Activated B cell treated with CpG ODN at 0.5 μM for 24 hours (primary cell): ENCODE measurements at regions of chrX and their contacts with region 1.

Region 1: DNA sequence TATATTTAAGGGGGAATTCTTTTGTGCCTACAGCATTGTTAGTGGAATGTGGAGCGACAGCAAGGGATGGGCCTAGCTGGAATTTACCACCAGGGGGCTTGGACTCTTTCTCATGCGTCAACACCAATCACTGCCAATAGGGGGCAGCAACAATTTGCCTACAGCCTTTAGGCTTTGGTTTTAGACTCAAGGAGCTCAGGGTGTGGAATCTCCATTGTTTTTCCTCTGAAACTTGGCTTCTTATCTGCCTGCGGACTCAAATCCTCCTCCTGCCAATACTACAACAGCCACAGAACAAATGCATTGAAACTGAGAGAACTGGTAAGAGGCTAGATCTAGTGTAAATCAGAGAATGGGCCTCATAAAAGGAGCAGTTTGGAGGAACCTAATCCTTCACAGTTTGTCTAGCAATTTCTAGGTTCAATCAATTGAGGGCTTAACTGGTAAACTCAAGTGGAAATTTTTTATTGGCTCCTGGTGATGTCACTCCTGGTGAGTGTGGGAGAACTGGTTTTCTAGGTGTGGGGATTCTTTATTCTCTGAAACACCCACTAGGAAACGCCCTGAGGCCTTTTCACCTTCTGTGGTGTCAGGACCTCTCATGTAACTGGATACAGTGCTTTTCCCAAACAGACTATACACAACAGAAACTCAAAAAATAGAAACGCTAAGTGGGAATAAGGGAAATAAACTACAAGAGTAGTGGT is 27.9 kb upstream of the TMSB4X start:
- DNase-seq: peak; percentile 47
- ATAC-seq: peak; percentile 19
- H3K4me3 Mint-ChIP-seq: peak overlapping the region; percentile 62
- H3K27ac Mint-ChIP-seq: peak overlapping the region; percentile 92
- H3K4me1 Mint-ChIP-seq: peaks cover 58% of the 10 kb centered on the region
- H3K27me3 Mint-ChIP-seq: no peaks in the 10 kb centered on the region
- CTCF ChIP-seq: no peak

Region 2: DNA sequence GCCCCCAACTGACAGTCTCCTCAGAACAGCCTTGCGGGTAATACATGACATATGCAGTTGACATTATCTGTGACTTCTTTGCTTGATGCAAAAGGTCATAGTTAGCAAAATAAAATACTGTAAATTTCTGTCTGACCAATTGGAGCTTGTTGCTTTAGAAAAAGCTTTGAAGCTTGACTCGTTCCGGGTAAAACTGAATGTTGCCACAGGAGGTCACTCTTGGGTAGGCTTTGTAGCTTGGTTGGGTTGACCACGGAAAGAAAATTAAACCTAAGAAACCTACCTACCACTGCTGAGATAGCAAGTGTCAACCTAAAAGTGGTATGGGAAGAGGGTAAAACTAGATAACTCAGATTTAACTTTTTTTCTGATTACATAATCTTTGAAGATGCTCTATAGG is 132.6 kb before region 1 on chrX:
- CTCF ChIA-PET with region 1: interaction called, 13 read pairs
- POLR2A ChIA-PET with region 1: interaction called, 3 read pairs
- intact Hi-C with region 1: no loop called
- DNase-seq: no peak
- ATAC-seq: peak; percentile 71
- H3K4me3 Mint-ChIP-seq: no peak overlapping the region
- H3K27ac Mint-ChIP-seq: no peak overlapping the region
- H3K4me1 Mint-ChIP-seq: no peaks in the 10 kb centered on the region
- H3K27me3 Mint-ChIP-seq: no peaks in the 10 kb centered on the region
- CTCF ChIP-seq: no peak

Region 3: GRCh38 chrX:12984629-12985319 is 37.8 kb after region 1 on chrX:
- CTCF ChIA-PET with region 1: interaction called, 13 read pairs
- POLR2A ChIA-PET with region 1: interaction called, 931 read pairs
- intact Hi-C with region 1: loop called (anchors 5 kb)
- DNase-seq: no peak
- ATAC-seq: peak; percentile 79
- H3K4me3 Mint-ChIP-seq: peak overlapping the region; percentile 53
- H3K27ac Mint-ChIP-seq: peak overlapping the region; percentile 91
- H3K4me1 Mint-ChIP-seq: peaks cover 62% of the 10 kb centered on the region
- H3K27me3 Mint-ChIP-seq: no peaks in the 10 kb centered on the region
- CTCF ChIP-seq: no peak

Region 4: DNA sequence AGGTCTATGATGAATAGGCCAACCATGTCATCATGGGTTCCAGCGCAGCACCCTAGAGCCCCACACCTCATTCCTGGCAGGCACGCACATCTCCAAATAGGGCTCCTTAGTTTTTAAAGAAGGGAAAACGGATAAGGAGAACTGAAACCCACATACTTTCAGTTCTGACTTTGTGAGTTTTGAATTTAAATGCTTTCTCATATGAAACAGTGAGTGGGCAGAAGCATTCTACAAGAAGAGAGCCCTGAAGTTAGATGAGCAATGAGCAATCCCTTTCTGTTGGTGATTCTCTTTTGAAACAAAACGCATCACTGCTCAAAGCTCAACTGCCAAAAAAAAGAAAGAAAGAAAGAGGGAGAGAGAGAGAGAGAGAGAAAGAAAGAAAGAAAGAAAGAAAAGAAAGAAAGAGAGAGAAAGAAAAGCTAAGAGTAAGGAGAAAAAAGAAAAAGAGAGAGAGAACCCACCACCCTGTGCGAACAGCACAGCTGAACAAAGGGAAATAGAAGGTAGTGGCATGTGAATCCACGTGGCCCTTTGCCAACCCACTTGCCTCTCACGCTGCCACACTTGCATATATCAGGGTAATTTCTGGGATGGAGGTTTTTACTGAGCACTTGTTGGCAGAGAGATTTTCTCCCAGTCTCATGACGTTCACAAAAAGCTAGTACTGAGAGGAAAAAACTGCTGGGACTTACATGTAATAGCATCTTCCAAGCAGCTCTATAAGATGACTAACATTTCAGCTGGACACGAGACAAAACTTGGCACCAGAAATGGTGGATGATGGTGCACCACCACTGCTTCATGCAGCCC is 58.9 kb after region 1 on chrX:
- CTCF ChIA-PET with region 1: interaction called, 16 read pairs
- POLR2A ChIA-PET with region 1: interaction called, 43 read pairs
- intact Hi-C with region 1: no loop called
- DNase-seq: no peak
- ATAC-seq: peak; percentile 61
- H3K4me3 Mint-ChIP-seq: peak overlapping the region; percentile 84
- H3K27ac Mint-ChIP-seq: peak overlapping the region; percentile 97
- H3K4me1 Mint-ChIP-seq: peaks cover 80% of the 10 kb centered on the region
- H3K27me3 Mint-ChIP-seq: no peaks in the 10 kb centered on the region
- CTCF ChIP-seq: no peak

Region 5: GRCh38 chrX:13078739-13079444 is 131.9 kb after region 1 on chrX:
- CTCF ChIA-PET with region 1: interaction called, 20 read pairs
- POLR2A ChIA-PET with region 1: interaction called, 15 read pairs
- intact Hi-C with region 1: loop called (anchors 1 kb)
- DNase-seq: no peak
- ATAC-seq: no peak
- H3K4me3 Mint-ChIP-seq: peak overlapping the region; percentile 56
- H3K27ac Mint-ChIP-seq: peak overlapping the region; percentile 89
- H3K4me1 Mint-ChIP-seq: peaks cover 94% of the 10 kb centered on the region
- H3K27me3 Mint-ChIP-seq: no peaks in the 10 kb centered on the region
- CTCF ChIP-seq: no peak

Region 6: GRCh38 chrX:13360146-13360545 is 413.2 kb after region 1 on chrX:
- CTCF ChIA-PET with region 1: interaction called, 3 read pairs
- POLR2A ChIA-PET with region 1: no interaction called
- intact Hi-C with region 1: loop called (anchors 1 kb)
- DNase-seq: no peak
- ATAC-seq: no peak
- H3K4me3 Mint-ChIP-seq: no peak overlapping the region
- H3K27ac Mint-ChIP-seq: no peak overlapping the region
- H3K4me1 Mint-ChIP-seq: peaks cover 7% of the 10 kb centered on the region
- H3K27me3 Mint-ChIP-seq: no peaks in the 10 kb centered on the region
- CTCF ChIP-seq: no peak

Region 7: DNA sequence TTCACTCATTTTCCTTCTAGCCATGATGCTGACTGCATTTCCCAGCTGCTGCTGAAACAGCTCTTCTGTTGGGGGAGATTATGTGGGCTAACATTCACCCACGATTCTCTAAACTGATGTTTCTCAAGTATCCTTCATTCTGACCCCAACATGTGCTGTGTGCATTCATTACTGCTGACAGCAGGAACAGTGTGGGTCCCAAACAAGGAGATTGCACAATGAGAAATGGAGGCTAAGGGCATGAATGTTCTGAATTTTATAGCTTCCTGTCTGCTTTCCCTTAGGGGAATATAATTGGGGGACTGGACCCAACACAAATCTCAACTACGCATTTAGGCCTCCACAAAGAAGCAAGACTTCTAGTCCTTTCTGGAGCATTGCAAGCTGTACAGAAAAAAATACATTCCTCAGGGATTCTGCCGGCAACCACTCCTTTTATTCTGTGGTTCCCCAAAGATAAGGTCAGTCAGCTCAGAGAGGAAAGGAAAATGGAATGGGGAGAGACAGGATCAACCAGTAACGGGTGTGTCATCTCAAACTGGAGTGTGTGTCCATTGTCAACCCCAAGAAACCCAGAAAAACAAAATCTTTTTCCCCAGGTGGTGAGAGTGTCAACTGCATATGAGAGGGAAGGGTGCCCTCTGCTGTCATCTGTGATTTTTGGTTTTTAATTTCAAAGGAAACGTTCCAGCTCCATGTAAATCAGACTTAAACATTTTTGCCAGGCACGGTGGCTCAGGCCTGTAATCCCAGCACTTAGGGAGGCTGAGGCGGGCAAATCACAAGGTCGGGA is 540.9 kb after region 1 on chrX:
- CTCF ChIA-PET with region 1: interaction called, 80 read pairs
- POLR2A ChIA-PET with region 1: interaction called, 21 read pairs
- intact Hi-C with region 1: loop called (anchors 1 kb)
- DNase-seq: no peak
- ATAC-seq: peak; percentile 59
- H3K4me3 Mint-ChIP-seq: no peak overlapping the region
- H3K27ac Mint-ChIP-seq: peak overlapping the region; percentile 89
- H3K4me1 Mint-ChIP-seq: peaks cover 21% of the 10 kb centered on the region
- H3K27me3 Mint-ChIP-seq: no peaks in the 10 kb centered on the region
- CTCF ChIP-seq: no peak